Left ventricle myocardium superior (tissue), 1 donor: ENCODE measurements at regions of chr2 and their contacts with region 1.

Region 1: GRCh38 chr2:149017116-149017985 is 21.1 kb upstream of the LYPD6B start:
- DNase-seq: peak; percentile 66
- ATAC-seq: peak; percentile 64

Region 2: DNA sequence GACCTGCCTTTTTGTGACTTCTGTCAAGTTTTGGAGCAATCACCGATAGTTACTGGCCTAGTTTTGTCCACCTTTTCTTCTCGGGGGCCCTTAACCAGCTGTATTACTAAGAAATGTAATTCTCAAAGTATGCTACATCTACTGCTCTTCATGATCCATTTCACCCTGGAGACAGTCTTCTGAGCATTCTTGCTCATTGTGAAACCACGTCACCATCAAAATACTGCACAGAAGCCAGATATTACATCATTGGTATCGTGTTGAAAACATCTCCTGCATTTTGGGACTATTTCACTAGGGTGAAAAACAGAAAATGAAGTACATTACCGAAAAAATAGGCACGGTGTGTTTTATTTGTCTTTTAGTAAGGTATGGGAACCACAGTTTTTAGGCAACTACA is 32.8 kb after region 1 on chr2:
- intact Hi-C with region 1: no loop called
- DNase-seq: no peak
- ATAC-seq: no peak

Region 3: GRCh38 chr2:149561309-149561926 is 544.1 kb after region 1 on chr2:
- intact Hi-C with region 1: loop called (anchors 5 kb)
- DNase-seq: no peak
- ATAC-seq: no peak